ENCODE measurements at regions of chr1 and their contacts with region 1.

Region 1: DNA sequence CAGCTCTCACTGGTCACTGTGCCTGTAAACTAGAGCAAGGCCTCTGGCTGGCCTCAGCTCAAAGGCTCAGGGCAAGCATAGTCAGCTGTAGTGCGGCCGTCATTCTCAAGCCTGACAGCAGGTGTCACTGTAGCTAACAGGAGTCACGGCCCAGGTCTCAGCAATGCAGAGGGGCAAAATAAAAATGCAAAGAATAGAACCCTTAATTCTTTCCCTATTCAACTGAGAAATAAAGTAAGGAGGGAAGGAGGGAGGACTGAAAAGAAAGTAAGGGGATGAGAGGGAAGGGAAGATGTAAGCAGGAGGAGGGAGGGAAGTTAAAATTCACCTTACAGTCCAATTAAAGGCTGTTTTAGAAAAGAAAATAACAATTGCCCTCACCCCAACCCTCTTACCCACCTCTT is 106.1 kb downstream of the KIAA0319L start:
- DNase-seq: peak; percentile 89
- ATAC-seq: peak; percentile 92
- H3K4me3 Mint-ChIP-seq: no peak overlapping the region
- H3K27ac Mint-ChIP-seq: no peak overlapping the region
- H3K4me1 Mint-ChIP-seq: peaks cover 32% of the 10 kb centered on the region
- H3K27me3 Mint-ChIP-seq: no peaks in the 10 kb centered on the region
- CTCF ChIP-seq: peak; percentile 74

Region 2: GRCh38 chr1:35431173-35431599 is 19.9 kb before region 1 on chr1:
- CTCF ChIA-PET with region 1: interaction called, 56 read pairs
- POLR2A ChIA-PET with region 1: interaction called, 3 read pairs
- intact Hi-C with region 1: no loop called
- DNase-seq: no peak
- ATAC-seq: peak; percentile 52
- H3K4me3 Mint-ChIP-seq: no peak overlapping the region
- H3K27ac Mint-ChIP-seq: peak overlapping the region; percentile 18
- H3K4me1 Mint-ChIP-seq: peaks cover 6% of the 10 kb centered on the region
- H3K27me3 Mint-ChIP-seq: no peaks in the 10 kb centered on the region
- CTCF ChIP-seq: no peak

Region 3: DNA sequence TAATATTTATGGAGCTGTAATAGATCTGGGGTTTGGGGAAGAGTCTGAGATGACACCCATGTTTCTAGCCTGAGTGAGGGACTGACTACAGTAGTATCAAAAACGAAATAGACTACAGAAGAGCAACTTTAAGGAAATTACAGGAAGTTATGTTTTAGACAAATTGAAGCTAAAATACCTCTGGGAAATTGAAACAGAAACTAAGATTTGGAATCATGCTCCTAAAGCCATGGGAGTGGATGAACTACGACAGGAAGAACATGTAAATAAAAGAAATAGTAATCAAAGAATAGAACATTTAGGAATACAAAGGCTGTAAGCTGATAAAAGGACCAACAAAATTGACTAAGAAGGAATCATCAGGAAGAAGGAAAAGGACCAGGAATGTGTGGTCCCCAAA is 37.2 kb after region 1 on chr1:
- CTCF ChIA-PET with region 1: interaction called, 10 read pairs
- POLR2A ChIA-PET with region 1: no interaction called
- intact Hi-C with region 1: no loop called
- DNase-seq: no peak
- ATAC-seq: no peak
- H3K4me3 Mint-ChIP-seq: no peak overlapping the region
- H3K27ac Mint-ChIP-seq: no peak overlapping the region
- H3K4me1 Mint-ChIP-seq: peaks cover 14% of the 10 kb centered on the region
- H3K27me3 Mint-ChIP-seq: no peaks in the 10 kb centered on the region
- CTCF ChIP-seq: no peak

Region 4: GRCh38 chr1:35511305-35511704 is 60.2 kb after region 1 on chr1:
- CTCF ChIA-PET with region 1: interaction called, 14 read pairs
- POLR2A ChIA-PET with region 1: interaction called, 4 read pairs
- intact Hi-C with region 1: no loop called
- DNase-seq: no peak
- ATAC-seq: no peak
- H3K4me3 Mint-ChIP-seq: no peak overlapping the region
- H3K27ac Mint-ChIP-seq: no peak overlapping the region
- H3K4me1 Mint-ChIP-seq: peaks cover 40% of the 10 kb centered on the region
- H3K27me3 Mint-ChIP-seq: no peaks in the 10 kb centered on the region
- CTCF ChIP-seq: no peak

Region 5: DNA sequence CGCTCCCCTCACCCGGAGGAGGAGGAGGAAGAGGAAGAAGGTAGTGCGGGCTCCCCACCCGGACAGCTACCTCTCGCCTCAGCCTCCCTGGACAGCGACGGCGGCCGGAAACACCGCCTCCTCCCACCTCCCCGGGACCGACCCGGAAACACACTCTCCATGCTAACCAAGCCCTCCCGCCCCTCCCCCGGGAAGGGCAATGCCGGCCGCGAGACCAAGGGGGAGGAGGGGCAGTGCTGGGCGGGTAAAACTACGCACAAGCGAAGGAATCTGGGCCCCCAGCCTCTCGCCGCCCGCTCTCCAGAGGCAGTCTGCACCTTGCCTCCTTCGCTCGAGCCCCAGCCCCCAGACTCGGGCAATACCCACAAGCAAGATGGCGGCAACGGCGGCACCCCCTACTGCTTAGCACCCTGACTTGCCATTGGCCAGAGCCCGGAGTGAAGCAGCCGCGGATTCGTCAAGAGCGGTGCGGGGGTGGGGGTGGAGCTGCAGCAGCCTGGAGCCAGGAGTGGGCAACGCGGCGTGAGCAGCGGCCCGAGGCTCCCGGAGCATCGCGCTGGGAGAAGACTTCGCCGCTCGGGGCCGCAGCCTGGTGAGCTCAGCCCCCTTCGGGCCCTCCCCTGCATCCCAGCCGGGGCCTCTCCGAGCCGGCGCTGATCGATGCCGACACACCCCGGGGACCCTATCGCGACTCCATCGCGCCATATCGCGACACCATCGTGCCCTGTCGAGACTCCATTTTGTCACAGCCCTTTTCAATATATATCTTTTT is 106.4 kb after region 1 on chr1 and contains the starts of genes KIAA0319L and NCDN:
- CTCF ChIA-PET with region 1: interaction called, 105 read pairs
- POLR2A ChIA-PET with region 1: interaction called, 6 read pairs
- intact Hi-C with region 1: loop called (anchors 5 kb)
- DNase-seq: peak; percentile 99
- ATAC-seq: peak; percentile 91
- H3K4me3 Mint-ChIP-seq: peak within 1 kb of the TSS; percentile 92
- H3K27ac Mint-ChIP-seq: peak within 1 kb of the TSS; percentile 96
- H3K4me1 Mint-ChIP-seq: peaks cover 45% of the 10 kb centered on the region
- H3K27me3 Mint-ChIP-seq: no peaks in the 10 kb centered on the region
- CTCF ChIP-seq: no peak
- total RNA-seq, gene KIAA0319L: 22.8 to 30.9 TPM
- total RNA-seq, gene NCDN: 17.3 to 17.5 TPM

Region 6: GRCh38 chr1:35715568-35716002 is 264.5 kb after region 1 on chr1:
- CTCF ChIA-PET with region 1: interaction called, 22 read pairs
- POLR2A ChIA-PET with region 1: interaction called, 4 read pairs
- intact Hi-C with region 1: no loop called
- DNase-seq: peak; percentile 85
- ATAC-seq: peak; percentile 60
- H3K4me3 Mint-ChIP-seq: peak overlapping the region; percentile 30
- H3K27ac Mint-ChIP-seq: no peak overlapping the region
- H3K4me1 Mint-ChIP-seq: peaks cover 30% of the 10 kb centered on the region
- H3K27me3 Mint-ChIP-seq: no peaks in the 10 kb centered on the region
- CTCF ChIP-seq: peak; percentile 96

Measured in activated CD8-positive, alpha-beta T cell treated with anti-CD3 and anti-CD28 coated beads for 36 hours (primary cell).